ENCODE measurements at regions of chr1 and their contacts with region 1.

Region 1: GRCh38 chr1:35539073-35539823 is 18.0 kb downstream of the KIAA0319L start:
- DNase-seq: no peak

Region 2: GRCh38 chr1:35507947-35508346 is 31.3 kb before region 1 on chr1:
- intact Hi-C with region 1: loop called (anchors 2 kb)
- DNase-seq: no peak

Region 3: GRCh38 chr1:35557292-35558063 is 18.2 kb after region 1 on chr1 and contains the starts of genes KIAA0319L and NCDN:
- intact Hi-C with region 1: loop called (anchors 2 kb)
- DNase-seq: peak; percentile 97
- total RNA-seq, gene KIAA0319L: 84.0 TPM
- total RNA-seq, gene NCDN: 56.0 TPM

Region 4: DNA sequence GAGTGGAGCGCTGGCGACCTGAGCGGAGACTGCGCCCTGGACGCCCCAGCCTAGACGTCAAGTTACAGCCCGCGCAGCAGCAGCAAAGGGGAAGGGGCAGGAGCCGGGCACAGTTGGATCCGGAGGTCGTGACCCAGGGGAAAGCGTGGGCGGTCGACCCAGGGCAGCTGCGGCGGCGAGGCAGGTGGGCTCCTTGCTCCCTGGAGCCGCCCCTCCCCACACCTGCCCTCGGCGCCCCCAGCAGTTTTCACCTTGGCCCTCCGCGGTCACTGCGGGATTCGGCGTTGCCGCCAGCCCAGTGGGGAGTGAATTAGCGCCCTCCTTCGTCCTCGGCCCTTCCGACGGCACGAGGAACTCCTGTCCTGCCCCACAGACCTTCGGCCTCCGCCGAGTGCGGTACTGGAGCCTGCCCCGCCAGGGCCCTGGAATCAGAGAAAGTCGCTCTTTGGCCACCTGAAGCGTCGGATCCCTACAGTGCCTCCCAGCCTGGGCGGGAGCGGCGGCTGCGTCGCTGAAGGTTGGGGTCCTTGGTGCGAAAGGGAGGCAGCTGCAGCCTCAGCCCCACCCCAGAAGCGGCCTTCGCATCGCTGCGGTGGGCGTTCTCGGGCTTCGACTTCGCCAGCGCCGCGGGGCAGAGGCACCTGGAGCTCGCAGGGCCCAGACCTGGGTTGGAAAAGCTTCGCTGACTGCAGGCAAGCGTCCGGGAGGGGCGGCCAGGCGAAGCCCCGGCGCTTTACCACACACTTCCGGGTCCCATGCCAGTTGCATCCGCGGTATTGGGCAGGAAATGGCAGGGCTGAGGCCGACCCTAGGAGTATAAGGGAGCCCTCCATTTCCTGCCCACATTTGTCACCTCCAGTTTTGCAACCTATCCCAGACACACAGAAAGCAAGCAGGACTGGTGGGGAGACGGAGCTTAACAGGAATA is 38.1 kb after region 1 on chr1:
- intact Hi-C with region 1: no loop called
- DNase-seq: peak; percentile 80

Measured in cardiac septum (tissue), 1 donor.